ENCODE measurements at regions of chr3 and their contacts with region 1.

Region 1: DNA sequence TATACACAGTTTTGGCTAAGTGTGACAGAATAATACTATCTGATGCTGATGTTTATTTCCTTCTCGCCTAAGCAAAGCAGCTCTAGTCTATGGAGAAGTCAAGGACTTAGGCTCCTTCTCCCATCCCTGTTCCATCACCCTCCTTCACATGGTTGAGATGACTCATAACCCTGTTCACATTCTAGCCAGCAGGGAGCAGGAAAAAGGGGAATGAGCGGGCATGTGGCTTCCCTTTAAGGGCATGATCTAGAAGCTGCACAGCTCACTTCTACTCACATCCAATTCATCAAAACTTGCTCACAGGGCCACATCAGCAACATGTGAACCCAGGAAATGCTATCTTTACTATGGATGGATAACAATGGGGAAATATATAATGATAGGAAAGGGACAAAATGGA is 40.9 kb downstream of the CBLB start:
- DNase-seq: peak in 1 of 2 donors; percentile 28
- ATAC-seq: peak; percentile 55 to 76 (median 64)
- H3K4me3 ChIP-seq: no peak overlapping the region
- H3K27ac ChIP-seq: peak overlapping the region in 8 of 10 donors; percentile 13 to 78 (median 28)
- H3K4me1 ChIP-seq: peaks cover 0 to 95% (median 70%) of the 10 kb centered on the region in 9 donors
- H3K27me3 ChIP-seq: no peaks in the 10 kb centered on the region
- CTCF ChIP-seq: peak in 5 of 9 donors; percentile 18 to 49 (median 28)

Region 2: GRCh38 chr3:105791919-105792786 is 35.8 kb before region 1 on chr3:
- intact Hi-C with region 1: loop called in 3 of 10 experiments (anchors 5 kb)
- DNase-seq: peak; percentile 56 to 68
- ATAC-seq: peak; percentile 75 to 96 (median 90)
- H3K4me3 ChIP-seq: no peak overlapping the region
- H3K27ac ChIP-seq: peak overlapping the region; percentile 67 to 84 (median 78)
- H3K4me1 ChIP-seq: peaks cover 11 to 64% (median 57%) of the 10 kb centered on the region in 9 donors
- H3K27me3 ChIP-seq: no peaks in the 10 kb centered on the region
- CTCF ChIP-seq: no peak

Measured in heart right ventricle (tissue), 16 donors.